ENCODE measurements at regions of chr20 and their contacts with region 1.

Region 1: DNA sequence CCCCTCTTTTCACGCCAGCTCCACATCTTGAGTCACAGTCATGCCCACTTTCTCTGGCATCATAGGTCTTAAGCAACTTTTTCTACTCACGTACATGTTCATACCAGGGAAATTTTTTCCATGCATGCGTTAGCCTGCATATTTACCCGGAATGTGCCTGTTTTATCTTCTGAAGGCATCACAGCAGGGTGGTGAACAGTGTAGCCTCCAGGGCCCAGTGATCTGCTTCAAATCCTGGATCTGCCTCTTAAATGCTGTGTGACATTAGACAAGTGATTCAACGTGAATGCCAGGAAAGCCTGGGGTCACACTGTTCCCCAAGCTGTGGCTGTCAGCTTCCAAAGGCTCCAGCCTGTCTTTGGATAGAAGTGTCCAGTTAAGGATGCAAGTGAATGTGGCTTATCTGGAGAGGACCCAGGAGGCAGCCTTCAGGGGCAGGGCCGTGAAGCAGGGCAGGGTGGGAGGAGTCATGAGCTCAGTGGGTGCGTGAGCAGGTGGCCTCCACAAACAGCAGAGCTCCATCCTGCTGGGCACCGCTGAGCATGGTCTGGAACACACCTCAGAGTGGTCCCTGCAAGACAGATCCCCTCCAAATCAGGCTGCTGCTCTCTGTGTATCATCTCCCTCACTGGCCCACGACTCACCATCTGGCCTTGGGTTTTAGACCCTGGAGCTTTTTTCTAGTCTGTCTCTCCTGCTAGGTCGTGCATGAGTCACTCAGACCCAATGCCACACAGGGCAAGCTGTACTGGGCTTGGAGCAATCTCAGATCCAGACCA is 30.4 kb upstream of the CD93 start:
- H3K4me3 Mint-ChIP-seq: peak overlapping the region; percentile 53
- H3K27ac Mint-ChIP-seq: peak overlapping the region; percentile 81
- H3K4me1 Mint-ChIP-seq: peaks cover 94% of the 10 kb centered on the region
- H3K27me3 Mint-ChIP-seq: peaks cover 5% of the 10 kb centered on the region

Region 2: DNA sequence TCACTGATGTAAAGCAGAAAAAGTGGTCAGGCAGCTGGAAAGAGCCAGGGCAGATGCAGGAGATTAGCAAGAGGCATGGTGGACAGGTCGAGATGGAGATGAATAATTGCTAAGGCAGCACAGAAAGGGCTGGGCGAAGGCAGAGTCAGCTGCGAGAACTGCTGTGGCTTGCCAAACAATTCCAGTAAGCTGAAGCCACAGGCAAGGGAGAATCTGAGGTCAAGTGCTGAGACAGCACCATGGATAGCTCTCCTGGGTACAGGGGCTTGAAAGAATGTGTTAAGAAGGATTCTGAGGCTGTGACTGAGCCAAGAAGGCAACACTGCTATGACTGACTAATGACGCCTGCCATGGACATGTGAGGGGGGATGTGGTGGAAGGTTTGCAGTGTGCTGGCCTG is 311.3 kb before region 1 on chr20:
- intact Hi-C with region 1: no loop called
- H3K4me3 Mint-ChIP-seq: no peak overlapping the region
- H3K27ac Mint-ChIP-seq: no peak overlapping the region
- H3K4me1 Mint-ChIP-seq: no peaks in the 10 kb centered on the region
- H3K27me3 Mint-ChIP-seq: peaks cover 14% of the 10 kb centered on the region

Region 3: GRCh38 chr20:22995923-22996322 is 120.6 kb before region 1 on chr20:
- intact Hi-C with region 1: no loop called
- H3K4me3 Mint-ChIP-seq: no peak overlapping the region
- H3K27ac Mint-ChIP-seq: no peak overlapping the region
- H3K4me1 Mint-ChIP-seq: no peaks in the 10 kb centered on the region
- H3K27me3 Mint-ChIP-seq: peaks cover 48% of the 10 kb centered on the region

Region 4: DNA sequence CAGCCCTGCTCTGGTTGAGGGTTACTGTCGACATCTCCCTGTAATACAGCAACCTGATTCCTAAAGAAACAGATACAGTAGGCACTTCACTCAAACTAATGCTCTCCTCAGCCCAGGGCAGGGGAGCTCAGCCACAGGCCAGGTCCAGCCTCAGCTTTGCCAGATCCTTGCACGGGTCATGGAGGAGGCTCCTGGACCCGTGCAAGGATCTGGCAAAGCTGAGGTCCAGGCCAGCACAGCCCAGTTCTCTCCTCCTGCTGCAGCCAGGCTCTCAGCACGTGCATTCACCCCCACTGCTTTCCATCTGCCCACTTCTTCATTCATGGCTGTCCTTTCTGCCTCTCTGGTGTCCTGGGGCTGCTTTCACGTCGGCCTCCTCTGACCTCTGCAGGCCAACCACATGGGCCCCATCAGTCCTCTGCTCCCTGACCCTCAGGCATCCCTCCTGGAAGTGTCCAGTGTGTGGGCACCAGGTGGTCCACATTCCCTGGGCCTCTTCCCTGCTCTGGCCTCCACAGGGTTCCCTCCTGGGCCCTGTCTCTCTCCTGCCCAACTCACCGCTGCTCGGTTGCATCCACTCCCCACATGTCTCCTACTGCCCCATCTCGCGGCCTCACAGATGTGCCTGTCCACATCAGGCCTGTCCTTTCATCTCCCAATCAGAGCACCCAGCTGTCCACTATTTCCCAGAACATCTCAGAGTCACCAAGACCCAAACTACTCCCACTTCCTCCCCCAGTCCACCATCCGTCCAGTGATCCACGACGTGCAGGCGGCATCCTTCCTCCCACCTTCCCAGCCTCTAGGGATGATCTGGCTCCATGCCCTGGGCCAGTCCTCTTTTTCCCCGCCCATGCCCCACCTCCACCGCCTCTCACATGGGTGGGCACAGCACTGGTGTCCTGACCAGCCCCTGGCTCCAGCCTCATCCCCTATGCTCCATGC is 18.6 kb before region 1 on chr20:
- intact Hi-C with region 1: loop called (anchors 1 kb)
- H3K4me3 Mint-ChIP-seq: peak overlapping the region; percentile 41
- H3K27ac Mint-ChIP-seq: peak overlapping the region; percentile 86
- H3K4me1 Mint-ChIP-seq: peaks cover 82% of the 10 kb centered on the region
- H3K27me3 Mint-ChIP-seq: no peaks in the 10 kb centered on the region

Region 5: DNA sequence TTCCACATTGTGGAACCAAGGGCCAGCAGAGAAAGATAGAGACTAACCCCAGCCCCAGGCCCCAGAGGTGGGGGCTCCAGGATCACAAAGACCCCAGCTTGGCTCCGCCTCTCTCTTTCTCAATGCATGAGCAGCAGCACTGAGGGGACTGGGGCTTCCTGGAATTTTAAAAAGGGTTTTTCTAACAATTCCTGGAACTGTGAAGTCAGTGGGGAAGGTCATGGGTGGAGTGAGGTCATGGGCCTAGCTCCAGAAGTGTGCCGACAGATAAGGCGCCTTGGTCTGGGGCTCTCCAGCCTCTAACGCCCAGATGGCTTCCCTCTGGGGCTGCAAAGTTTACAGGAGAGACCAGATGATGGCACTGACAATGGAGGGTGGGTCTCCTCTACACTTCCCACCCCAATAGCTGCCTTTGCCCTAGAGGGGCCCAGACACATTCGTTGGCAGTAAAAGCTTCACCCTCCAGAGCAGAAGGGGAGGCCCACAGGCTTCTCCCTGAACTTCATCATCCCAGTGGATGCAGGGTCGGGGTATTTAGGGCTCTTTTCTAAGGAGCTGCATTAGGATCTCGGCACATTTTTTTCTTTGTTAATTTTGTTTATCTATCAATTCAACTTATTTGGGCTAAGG is 16.5 kb after region 1 on chr20:
- intact Hi-C with region 1: loop called (anchors 2 kb)
- H3K4me3 Mint-ChIP-seq: no peak overlapping the region
- H3K27ac Mint-ChIP-seq: peak overlapping the region; percentile 98
- H3K4me1 Mint-ChIP-seq: peaks cover 87% of the 10 kb centered on the region
- H3K27me3 Mint-ChIP-seq: no peaks in the 10 kb centered on the region

Region 6: GRCh38 chr20:23147964-23148730 is 31.6 kb after region 1 on chr20:
- intact Hi-C with region 1: loop called (anchors 5 kb)
- H3K4me3 Mint-ChIP-seq: peak overlapping the region; percentile 45
- H3K27ac Mint-ChIP-seq: peak overlapping the region; percentile 88
- H3K4me1 Mint-ChIP-seq: peaks cover 97% of the 10 kb centered on the region
- H3K27me3 Mint-ChIP-seq: no peaks in the 10 kb centered on the region

Region 7: GRCh38 chr20:23235173-23236027 is 118.9 kb after region 1 on chr20:
- intact Hi-C with region 1: no loop called
- H3K4me3 Mint-ChIP-seq: no peak overlapping the region
- H3K27ac Mint-ChIP-seq: no peak overlapping the region
- H3K4me1 Mint-ChIP-seq: peaks cover 36% of the 10 kb centered on the region
- H3K27me3 Mint-ChIP-seq: peaks cover 25% of the 10 kb centered on the region

Region 8: GRCh38 chr20:23461180-23461579 is 344.7 kb after region 1 on chr20:
- intact Hi-C with region 1: no loop called
- H3K4me3 Mint-ChIP-seq: no peak overlapping the region
- H3K27ac Mint-ChIP-seq: no peak overlapping the region
- H3K4me1 Mint-ChIP-seq: peaks cover 8% of the 10 kb centered on the region
- H3K27me3 Mint-ChIP-seq: peaks cover 5% of the 10 kb centered on the region